AG04449 (cell line): ENCODE measurements at regions of chr19 and their contacts with region 1.

Region 1: DNA sequence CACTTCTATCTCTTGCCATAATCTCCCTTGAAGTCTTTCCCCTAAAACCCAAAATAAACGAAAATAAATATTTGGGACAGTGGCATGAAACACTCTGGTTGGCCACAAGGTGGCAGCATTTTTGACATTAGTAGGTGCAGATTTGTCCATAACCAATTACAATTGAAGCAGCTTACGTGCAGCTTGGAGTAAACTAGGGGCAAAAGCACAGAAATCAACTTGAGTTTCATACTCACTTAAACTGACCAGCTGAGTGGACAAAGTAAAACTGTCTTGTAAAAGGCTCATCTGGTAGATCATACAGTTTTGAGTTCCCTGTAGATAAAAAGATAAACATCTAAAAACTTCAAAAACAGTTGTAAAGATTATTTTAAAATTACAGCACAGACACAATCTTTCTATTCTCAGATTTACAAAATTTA is 18.8 kb downstream of the PDCD5 start:
- DNase-seq: peak; percentile 24
- H3K4me3 ChIP-seq: no peak overlapping the region
- CTCF ChIP-seq: peak; percentile 59

Region 2: DNA sequence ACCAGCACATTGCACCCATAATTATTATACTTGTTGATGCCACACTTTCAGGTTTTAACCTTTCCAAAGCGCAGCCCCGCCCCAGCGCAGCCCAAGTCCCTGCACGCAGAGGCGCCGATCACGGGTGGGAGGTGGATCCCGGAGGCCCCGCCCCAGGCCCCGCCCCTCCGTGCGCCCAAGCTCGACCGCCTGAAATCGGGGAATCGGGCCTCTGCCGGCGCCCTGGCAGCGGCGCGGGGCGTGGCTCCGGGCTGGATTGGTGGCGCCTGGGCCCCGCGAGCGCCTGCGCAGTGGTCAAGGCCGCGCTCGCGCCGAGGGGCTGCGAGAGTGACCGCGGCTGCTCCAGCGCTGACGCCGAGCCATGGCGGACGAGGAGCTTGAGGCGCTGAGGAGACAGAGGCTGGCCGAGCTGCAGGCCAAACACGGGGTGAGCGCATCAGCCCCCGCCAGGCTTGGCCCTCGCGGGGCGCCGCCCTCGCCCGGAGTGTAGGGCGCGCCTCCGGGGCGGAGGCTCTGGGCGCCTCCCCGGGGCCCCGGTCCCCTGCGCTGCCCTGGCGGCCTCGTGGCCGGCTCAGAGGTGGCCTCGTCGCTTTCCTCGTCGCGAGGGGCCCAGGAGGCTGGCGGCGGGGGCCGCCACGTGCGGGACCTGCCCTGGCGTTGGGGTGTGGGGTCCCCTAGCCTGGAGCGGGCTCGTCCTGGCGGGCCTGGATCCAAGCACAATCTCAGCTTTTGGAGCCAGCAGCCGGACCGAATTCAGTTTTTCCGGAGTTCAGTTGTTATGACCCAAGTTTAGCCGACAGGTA is 18.6 kb before region 1 on chr19 and contains the start of gene PDCD5:
- CTCF ChIA-PET with region 1: interaction called, 35 read pairs
- POLR2A ChIA-PET with region 1: no interaction called
- DNase-seq: peak; percentile 10
- H3K4me3 ChIP-seq: peak within 1 kb of the TSS; percentile 86
- CTCF ChIP-seq: no peak

Region 3: GRCh38 chr19:32611161-32611560 is 11.4 kb after region 1 on chr19:
- CTCF ChIA-PET with region 1: interaction called, 11 read pairs
- POLR2A ChIA-PET with region 1: no interaction called
- DNase-seq: no peak
- H3K4me3 ChIP-seq: no peak overlapping the region
- CTCF ChIP-seq: no peak